K562 (cell line): ENCODE measurements at regions of chr19 and their contacts with region 1.

Region 1: GRCh38 chr19:46021531-46022041 is 1.3 kb downstream of the PGLYRP1 start:
- DNase-seq: peak; percentile 44 to 63 (median 56)
- ATAC-seq: peak; percentile 92
- H3K4me3 ChIP-seq: no peak overlapping the region
- H3K27ac ChIP-seq: no peak overlapping the region
- H3K4me1 ChIP-seq: peaks cover 8 to 29% of the 10 kb centered on the region in 2 experiments; a peak in 4 of 5 replicates
- H3K27me3 ChIP-seq: no peaks in the 10 kb centered on the region
- CTCF ChIP-seq: peak; percentile 44 to 51 (median 48)
- EP300 ChIP-seq: no peak
- POLR2A ChIP-seq: no peak
- RAD21 ChIP-seq: no peak

Region 2: DNA sequence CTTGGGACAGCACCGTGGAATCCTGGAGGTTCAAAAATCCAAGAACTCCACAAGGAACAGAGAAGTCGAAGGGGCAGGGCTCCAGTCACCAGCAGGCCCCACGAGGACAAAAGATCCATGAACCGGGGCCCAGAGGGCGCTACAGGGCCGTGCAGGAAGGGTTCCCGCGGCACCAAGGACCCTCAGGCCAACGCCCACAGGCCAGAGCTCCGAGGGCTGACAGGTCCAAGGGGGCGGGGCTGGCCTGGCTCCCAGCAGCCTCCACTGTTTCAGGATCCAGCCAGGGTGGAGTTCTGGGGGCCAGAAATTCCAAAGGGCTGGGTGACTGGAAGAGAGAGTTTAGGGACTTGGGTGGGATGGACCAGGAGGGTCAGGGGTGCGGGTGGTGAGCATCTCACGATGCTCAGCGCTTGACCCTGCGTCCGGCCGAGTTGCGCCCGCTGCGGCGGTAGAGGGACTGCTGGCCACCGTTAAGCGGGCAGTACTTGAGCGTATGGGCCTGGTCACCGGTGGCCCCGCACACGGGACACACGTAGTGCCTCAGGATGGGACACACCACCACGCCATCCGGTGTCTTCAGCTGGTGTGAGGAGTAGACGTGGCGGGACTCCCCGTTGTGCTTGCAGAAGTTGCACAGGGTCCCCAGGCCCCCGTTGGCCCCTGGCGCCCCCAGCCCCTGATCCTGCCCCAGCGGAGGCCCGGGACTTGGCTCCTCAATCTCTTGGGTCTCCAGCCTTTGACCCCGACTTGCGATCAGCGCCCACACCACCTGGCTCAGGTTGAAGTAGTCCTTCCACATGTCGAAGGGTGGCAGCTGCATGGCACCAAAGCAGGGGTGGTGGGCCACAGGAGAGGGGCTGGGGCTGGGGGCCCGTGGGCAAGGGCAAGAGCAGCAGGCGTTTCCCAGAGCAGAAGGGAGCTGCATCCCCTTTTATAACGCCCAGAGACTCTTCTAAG is 107.4 kb before region 1 on chr19 and contains the start of gene NANOS2:
- CTCF ChIA-PET with region 1: interaction called, 3 read pairs
- POLR2A ChIA-PET with region 1: no interaction called
- in situ Hi-C with region 1: no loop called
- intact Hi-C with region 1: loop called (anchors 5 kb)
- DNase-seq: peak; percentile 72 to 82 (median 78)
- ATAC-seq: peak; percentile 96
- H3K4me3 ChIP-seq: no peak within 1 kb of the TSS
- H3K27ac ChIP-seq: no peak within 1 kb of the TSS
- H3K4me1 ChIP-seq: peaks cover 0 to 9% of the 10 kb centered on the region in 2 experiments; a peak in 2 of 5 replicates
- H3K27me3 ChIP-seq: peaks cover 11 to 20% of the 10 kb centered on the region in 2 experiments; a peak in 3 of 5 replicates
- CTCF ChIP-seq: peak; percentile 61 to 85 (median 64)
- EP300 ChIP-seq: no peak
- POLR2A ChIP-seq: no peak
- RAD21 ChIP-seq: peak in 1 of 2 experiments; percentile 62; a peak in 2 of 4 replicates
- polyA plus RNA-seq, gene NANOS2: not detected